Activated CD4-positive, alpha-beta memory T cell treated with anti-CD3 and anti-CD28 coated beads for 36 hours (primary cell): ENCODE measurements at regions of chr20 and their contacts with region 1.

Region 1: DNA sequence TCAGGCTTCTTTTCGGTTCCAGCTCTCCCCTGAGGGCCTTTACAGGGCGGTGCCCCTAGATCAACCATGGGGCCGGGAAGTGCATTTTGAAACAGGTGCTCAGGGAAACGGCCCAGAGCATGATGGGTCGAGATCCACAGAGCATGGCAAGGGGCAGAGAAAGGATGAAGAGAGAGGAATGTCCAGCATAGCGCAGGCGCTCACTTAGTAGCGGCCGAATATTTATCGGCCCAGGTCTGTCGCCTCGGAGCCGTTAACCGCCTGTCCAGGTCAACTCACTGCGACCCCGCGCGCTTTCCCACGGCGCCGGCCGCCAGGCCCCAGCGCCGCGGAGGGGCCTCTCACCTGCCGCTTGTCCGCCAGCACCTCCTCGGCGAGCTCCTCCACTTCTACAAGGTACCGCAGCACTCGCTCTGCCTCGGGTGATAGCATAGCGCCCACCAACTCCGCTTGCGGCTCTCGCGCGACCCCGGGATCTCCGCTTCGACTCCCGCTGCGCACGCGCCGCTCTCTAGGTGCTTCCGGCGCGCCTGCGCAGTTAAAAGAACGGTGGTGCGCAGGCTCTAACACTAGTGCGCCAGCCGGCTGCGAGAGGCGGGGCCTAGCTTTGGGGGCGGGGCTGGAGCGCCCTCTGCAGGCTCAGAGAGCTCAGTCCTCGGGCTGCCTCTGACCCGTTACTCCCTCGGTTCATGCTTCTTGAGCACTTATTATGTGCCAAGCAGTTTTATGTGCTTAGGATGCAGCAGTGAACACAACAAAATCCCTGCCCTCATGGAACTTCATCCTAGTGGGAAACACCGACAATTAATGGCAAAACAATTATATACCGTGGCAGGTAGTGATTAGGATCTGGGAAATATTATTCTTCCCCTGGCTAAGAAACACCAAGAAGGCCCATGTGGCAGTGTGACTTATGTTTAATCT is at the start of gene PDRG1:
- DNase-seq: peak; percentile 98
- H3K4me3 Mint-ChIP-seq: peak within 1 kb of the TSS; percentile 97
- H3K27ac Mint-ChIP-seq: peak within 1 kb of the TSS; percentile 90
- H3K4me1 Mint-ChIP-seq: peaks cover 27% of the 10 kb centered on the region
- H3K27me3 Mint-ChIP-seq: peaks cover 8% of the 10 kb centered on the region
- total RNA-seq, gene PDRG1: 12.1 to 13.2 TPM

Region 2: GRCh38 chr20:31822421-31823330 is 129.1 kb before region 1 on chr20:
- CTCF ChIA-PET with region 1: interaction called, 26 read pairs
- POLR2A ChIA-PET with region 1: no interaction called
- intact Hi-C with region 1: loop called (anchors 2 kb)
- DNase-seq: peak; percentile 81
- H3K4me3 Mint-ChIP-seq: no peak overlapping the region
- H3K27ac Mint-ChIP-seq: no peak overlapping the region
- H3K4me1 Mint-ChIP-seq: peaks cover 5% of the 10 kb centered on the region
- H3K27me3 Mint-ChIP-seq: no peaks in the 10 kb centered on the region

Region 3: GRCh38 chr20:31845300-31845863 is 106.4 kb before region 1 on chr20 and contains the start of gene FOXS1:
- CTCF ChIA-PET with region 1: interaction called, 102 read pairs
- POLR2A ChIA-PET with region 1: no interaction called
- intact Hi-C with region 1: no loop called
- DNase-seq: no peak
- H3K4me3 Mint-ChIP-seq: no peak within 1 kb of the TSS
- H3K27ac Mint-ChIP-seq: no peak within 1 kb of the TSS
- H3K4me1 Mint-ChIP-seq: no peaks in the 10 kb centered on the region
- H3K27me3 Mint-ChIP-seq: peaks cover 3% of the 10 kb centered on the region
- total RNA-seq, gene FOXS1: not detected

Region 4: DNA sequence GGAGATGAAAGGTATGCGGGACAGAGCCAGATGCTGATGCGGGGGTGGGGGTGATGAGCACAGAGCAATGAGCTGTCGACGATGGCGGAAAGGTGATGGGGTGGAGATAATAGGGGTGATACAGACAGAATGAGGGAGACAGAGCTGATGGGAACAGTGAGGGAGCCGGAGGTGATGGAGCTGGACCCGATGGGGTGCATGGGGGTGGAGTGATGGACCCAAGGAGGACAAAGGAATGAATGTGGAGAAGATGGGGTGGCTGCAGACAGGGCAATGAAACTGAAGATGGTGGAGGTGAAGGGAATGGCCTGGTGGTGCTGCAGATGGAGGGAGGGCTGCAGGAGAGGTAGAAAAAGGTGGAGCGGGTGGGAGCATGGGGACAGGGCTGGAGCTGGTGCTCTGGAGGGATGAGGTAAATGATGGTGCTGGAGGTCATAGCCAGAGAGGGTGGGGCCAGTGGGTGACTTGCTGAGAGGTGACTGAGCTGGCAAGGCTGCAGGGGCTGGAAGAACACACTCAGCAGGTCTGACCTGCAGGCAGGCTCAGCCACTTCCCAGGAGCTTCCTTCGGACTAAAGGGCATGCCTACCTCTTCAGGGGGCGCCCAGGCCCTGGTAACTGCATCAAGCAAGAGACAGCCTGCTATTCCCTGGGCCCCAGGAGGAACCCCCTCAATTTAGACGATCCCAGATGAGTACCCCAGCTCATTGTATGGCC is 100.4 kb before region 1 on chr20:
- CTCF ChIA-PET with region 1: interaction called, 102 read pairs
- POLR2A ChIA-PET with region 1: no interaction called
- intact Hi-C with region 1: loop called (anchors 1 kb)
- DNase-seq: no peak
- H3K4me3 Mint-ChIP-seq: no peak overlapping the region
- H3K27ac Mint-ChIP-seq: no peak overlapping the region
- H3K4me1 Mint-ChIP-seq: no peaks in the 10 kb centered on the region
- H3K27me3 Mint-ChIP-seq: peaks cover 10% of the 10 kb centered on the region

Region 5: GRCh38 chr20:31879143-31879987 is 72.4 kb before region 1 on chr20:
- CTCF ChIA-PET with region 1: interaction called, 10 read pairs
- POLR2A ChIA-PET with region 1: no interaction called
- intact Hi-C with region 1: loop called (anchors 1 kb)
- DNase-seq: peak; percentile 86
- H3K4me3 Mint-ChIP-seq: peak overlapping the region; percentile 92
- H3K27ac Mint-ChIP-seq: no peak overlapping the region
- H3K4me1 Mint-ChIP-seq: peaks cover 9% of the 10 kb centered on the region
- H3K27me3 Mint-ChIP-seq: no peaks in the 10 kb centered on the region

Region 6: GRCh38 chr20:31968291-31969126 is 16.7 kb after region 1 on chr20:
- CTCF ChIA-PET with region 1: interaction called, 24 read pairs
- POLR2A ChIA-PET with region 1: no interaction called
- intact Hi-C with region 1: no loop called
- DNase-seq: peak; percentile 86
- H3K4me3 Mint-ChIP-seq: peak overlapping the region; percentile 66
- H3K27ac Mint-ChIP-seq: no peak overlapping the region
- H3K4me1 Mint-ChIP-seq: peaks cover 5% of the 10 kb centered on the region
- H3K27me3 Mint-ChIP-seq: peaks cover 49% of the 10 kb centered on the region

Region 7: DNA sequence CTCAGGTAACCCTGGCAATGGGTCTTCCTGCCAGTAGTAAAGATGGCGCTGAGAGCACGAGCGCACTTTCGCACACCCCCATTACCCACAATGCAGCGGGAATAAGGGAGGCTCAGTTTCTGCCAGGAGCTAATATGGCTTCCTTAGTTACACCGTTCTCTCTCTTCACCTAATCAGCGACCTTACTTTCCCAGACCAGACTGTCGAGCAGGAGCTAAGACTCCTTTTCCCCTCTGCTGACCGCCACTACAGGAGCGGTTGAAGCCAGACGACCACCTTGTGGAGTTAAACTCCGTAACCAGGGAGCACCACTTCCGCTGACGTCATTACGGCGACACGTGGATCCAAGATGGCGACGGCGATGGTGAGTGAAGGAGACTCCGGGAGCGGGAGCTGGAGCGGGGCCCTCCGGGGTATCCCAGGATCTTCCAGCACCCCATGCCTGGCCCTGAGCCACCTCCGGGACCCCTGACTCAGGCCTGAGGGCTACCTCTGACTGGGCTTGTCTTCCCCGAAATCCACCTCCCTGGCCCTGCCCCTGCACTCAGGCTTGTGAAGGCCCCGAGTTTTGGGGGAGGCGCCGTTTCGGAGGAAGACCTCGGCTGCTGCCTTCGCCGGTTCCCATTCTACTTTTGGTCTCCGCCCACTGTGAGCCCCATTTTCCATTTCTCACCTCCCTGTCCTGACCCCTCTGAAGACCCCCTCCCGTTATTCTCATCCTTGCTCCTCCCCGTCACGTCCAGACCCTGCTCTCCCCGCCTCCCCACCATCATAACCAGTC is 157.8 kb after region 1 on chr20 and contains the start of gene TM9SF4:
- CTCF ChIA-PET with region 1: no interaction called
- POLR2A ChIA-PET with region 1: no interaction called
- intact Hi-C with region 1: loop called (anchors 2 kb)
- DNase-seq: peak; percentile 92
- H3K4me3 Mint-ChIP-seq: peak within 1 kb of the TSS; percentile 89
- H3K27ac Mint-ChIP-seq: peak within 1 kb of the TSS; percentile 93
- H3K4me1 Mint-ChIP-seq: peaks cover 36% of the 10 kb centered on the region
- H3K27me3 Mint-ChIP-seq: no peaks in the 10 kb centered on the region
- total RNA-seq, gene TM9SF4: 35.8 to 37.3 TPM